ENCODE measurements at regions of chr17 and their contacts with region 1.

Region 1: GRCh38 chr17:16329519-16330271 is 23.6 kb downstream of the CENPV start:
- DNase-seq: peak; percentile 47 to 58
- H3K4me3 ChIP-seq: no peak overlapping the region
- H3K27ac ChIP-seq: peak overlapping the region; percentile 53
- H3K4me1 ChIP-seq: peaks cover 17% of the 10 kb centered on the region
- H3K27me3 ChIP-seq: no peaks in the 10 kb centered on the region
- CTCF ChIP-seq: no peak

Region 2: DNA sequence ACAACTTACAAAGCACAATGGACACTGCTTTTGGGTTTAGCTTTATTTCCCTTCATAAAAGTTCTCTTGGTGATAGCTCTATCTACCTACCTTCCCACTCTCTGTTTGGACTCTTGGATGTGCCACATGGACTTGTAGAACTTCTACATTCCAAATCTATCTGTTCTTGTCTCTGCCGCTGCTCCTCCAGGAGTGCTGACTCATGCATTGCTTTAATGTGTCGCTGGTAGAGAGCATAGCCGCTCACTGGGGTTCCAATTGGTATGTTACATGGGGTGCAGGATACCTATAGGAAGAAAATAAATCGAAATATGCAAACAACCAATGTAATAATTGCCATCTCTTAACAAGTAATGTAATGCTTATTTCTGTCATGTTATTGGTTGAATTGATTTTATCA is 237.9 kb before region 1 on chr17:
- CTCF ChIA-PET with region 1: no interaction called
- POLR2A ChIA-PET with region 1: interaction called, 27 read pairs
- intact Hi-C with region 1: no loop called
- DNase-seq: no peak
- H3K4me3 ChIP-seq: no peak overlapping the region
- H3K27ac ChIP-seq: no peak overlapping the region
- H3K4me1 ChIP-seq: no peaks in the 10 kb centered on the region
- H3K27me3 ChIP-seq: no peaks in the 10 kb centered on the region
- CTCF ChIP-seq: no peak